ENCODE measurements at regions of chr2 and their contacts with region 1.

Region 1: DNA sequence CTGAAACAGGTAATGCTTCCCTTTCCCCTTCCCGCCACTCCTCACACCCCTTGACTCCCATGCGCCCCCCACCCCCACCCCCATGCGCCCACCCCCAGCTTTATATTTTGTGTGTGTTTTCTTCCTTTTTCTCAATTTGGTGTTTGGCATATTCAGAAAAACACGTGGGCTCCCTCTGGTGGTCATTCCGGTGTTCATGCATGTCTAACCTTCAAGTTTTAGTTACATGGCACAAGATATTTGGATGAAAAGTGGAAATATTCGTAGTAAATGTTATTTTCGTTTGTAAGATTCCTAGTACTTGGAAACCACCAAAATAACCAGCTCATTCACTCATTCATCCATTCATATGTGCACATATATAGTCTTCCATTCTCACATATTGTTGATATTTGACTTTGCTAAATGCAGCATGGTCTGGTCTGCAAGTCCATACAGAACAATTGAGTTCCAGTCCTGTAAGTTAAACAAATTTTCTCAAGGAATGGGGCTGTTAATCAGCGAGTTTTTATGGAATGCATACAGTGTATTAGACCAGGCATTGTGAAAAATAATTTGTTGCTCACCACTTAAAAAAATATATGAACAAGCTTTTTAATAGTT is 143.6 kb upstream of the MAP3K20 start:
- DNase-seq: peak; percentile 79
- ATAC-seq: peak; percentile 42
- H3K4me3 Mint-ChIP-seq: no peak overlapping the region
- H3K27ac Mint-ChIP-seq: no peak overlapping the region
- H3K4me1 Mint-ChIP-seq: peaks cover 6% of the 10 kb centered on the region
- H3K27me3 Mint-ChIP-seq: peaks cover 7% of the 10 kb centered on the region

Region 2: GRCh38 chr2:172806493-172806892 is 125.5 kb before region 1 on chr2:
- CTCF ChIA-PET with region 1: interaction called, 67 read pairs
- POLR2A ChIA-PET with region 1: no interaction called
- DNase-seq: peak; percentile 30
- ATAC-seq: no peak
- H3K4me3 Mint-ChIP-seq: no peak overlapping the region
- H3K27ac Mint-ChIP-seq: no peak overlapping the region
- H3K4me1 Mint-ChIP-seq: no peaks in the 10 kb centered on the region
- H3K27me3 Mint-ChIP-seq: no peaks in the 10 kb centered on the region

Region 3: GRCh38 chr2:172864182-172864581 is 67.8 kb before region 1 on chr2:
- CTCF ChIA-PET with region 1: interaction called, 19 read pairs
- POLR2A ChIA-PET with region 1: no interaction called
- DNase-seq: peak; percentile 56
- ATAC-seq: no peak
- H3K4me3 Mint-ChIP-seq: no peak overlapping the region
- H3K27ac Mint-ChIP-seq: no peak overlapping the region
- H3K4me1 Mint-ChIP-seq: no peaks in the 10 kb centered on the region
- H3K27me3 Mint-ChIP-seq: peaks cover 8% of the 10 kb centered on the region

Region 4: DNA sequence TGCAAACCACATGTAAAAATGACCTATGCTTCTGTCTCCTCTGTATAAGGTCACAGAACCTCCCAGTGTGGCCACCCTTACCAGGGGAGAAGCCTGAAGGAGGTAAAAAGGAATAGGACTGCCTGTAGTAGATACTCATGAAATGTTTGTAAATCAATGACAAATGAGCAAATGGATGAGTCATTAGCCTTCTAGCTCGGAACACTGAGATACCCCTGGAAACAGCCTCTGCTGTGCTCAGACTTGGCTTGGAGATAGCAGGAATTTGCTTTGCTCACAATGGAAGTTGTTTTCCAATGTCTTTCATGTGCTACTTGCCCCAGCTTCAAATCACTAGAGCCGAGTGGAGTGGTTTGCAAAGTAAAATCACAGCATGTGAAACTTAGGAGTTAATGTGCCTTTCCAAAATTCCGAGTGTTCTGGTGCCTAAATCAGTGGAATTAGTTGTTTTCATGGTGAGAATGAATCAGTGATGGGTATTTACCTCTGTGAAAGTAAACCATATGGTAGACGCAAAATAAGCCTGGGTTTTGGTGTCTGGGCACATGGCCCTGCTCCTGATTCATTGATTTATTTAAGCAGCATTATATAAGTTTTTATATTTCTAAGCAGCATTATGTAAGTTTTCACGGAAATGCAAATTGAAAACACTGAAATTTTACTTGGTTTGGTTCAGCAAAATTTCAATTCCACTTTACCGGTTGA is 10.3 kb before region 1 on chr2:
- CTCF ChIA-PET with region 1: interaction called, 21 read pairs
- POLR2A ChIA-PET with region 1: no interaction called
- DNase-seq: no peak
- ATAC-seq: no peak
- H3K4me3 Mint-ChIP-seq: no peak overlapping the region
- H3K27ac Mint-ChIP-seq: no peak overlapping the region
- H3K4me1 Mint-ChIP-seq: no peaks in the 10 kb centered on the region
- H3K27me3 Mint-ChIP-seq: peaks cover 1% of the 10 kb centered on the region

Region 5: DNA sequence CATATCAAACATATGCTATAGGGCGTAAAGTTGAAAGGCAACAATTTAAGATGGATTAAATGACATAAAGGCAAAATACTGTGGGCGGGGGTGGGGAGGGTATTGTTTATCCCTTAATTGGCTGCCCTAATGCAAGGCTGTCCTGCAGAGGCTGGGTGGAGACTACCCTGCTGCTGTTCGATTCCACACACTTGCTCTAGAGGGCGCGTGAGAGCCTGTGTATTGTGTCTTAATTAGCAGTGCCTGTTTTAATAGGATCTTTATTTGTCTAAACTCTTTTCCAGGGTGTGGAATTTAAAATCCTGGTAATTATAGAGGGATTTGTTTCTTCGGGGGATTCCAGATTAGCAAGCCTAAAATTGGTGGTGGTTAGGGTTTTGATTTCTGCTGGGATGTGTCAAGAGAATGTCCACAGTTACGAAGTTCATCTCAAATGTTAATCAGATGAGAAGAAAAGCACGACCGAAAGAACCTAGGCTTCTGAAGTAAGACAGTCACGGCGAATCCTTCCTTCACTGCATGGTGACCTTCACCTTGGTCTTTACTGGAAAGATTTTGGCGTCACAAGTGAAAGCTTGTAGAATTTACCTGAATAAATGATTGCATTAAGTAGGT is 40.1 kb after region 1 on chr2:
- CTCF ChIA-PET with region 1: interaction called, 14 read pairs
- POLR2A ChIA-PET with region 1: no interaction called
- DNase-seq: peak; percentile 62
- ATAC-seq: peak; percentile 61
- H3K4me3 Mint-ChIP-seq: no peak overlapping the region
- H3K27ac Mint-ChIP-seq: no peak overlapping the region
- H3K4me1 Mint-ChIP-seq: peaks cover 11% of the 10 kb centered on the region
- H3K27me3 Mint-ChIP-seq: peaks cover 14% of the 10 kb centered on the region

Region 6: GRCh38 chr2:173048897-173049661 is 117.1 kb after region 1 on chr2:
- CTCF ChIA-PET with region 1: no interaction called
- POLR2A ChIA-PET with region 1: no interaction called
- DNase-seq: no peak
- ATAC-seq: no peak
- H3K4me3 Mint-ChIP-seq: no peak overlapping the region
- H3K27ac Mint-ChIP-seq: no peak overlapping the region
- H3K4me1 Mint-ChIP-seq: peaks cover 5% of the 10 kb centered on the region
- H3K27me3 Mint-ChIP-seq: peaks cover 16% of the 10 kb centered on the region

Region 7: DNA sequence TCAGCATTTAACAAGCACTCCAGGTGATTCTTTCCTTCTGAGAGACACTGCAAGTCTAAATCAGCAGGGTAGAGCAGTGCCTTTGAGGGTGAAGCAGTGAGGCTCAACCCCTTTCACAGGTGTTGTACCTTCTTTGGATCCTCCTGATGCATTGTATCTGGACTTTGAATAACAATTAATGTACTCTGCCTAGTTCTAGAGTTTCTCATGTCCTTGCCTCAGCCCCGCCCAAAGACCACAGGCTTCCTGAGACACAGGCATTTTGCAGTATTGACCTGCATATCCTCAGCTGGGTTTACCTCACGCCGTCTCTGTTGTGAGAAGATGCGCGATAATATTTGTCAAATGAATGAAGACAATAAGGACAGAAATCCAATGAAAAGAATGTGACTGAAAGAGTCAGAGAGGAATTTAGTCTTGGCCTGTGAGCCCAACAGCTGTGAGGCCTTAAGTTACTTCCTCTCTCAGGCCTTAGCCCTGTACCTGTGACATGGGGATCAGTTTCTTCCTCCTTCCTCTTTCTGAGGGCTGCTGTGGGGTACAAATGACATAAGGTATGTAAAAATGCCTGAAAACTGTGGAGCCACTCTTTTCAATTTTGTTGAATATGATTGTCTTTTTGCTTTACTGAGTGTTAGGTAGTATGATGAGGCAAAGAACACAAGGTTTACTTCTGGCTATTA is 1621.9 kb after region 1 on chr2:
- CTCF ChIA-PET with region 1: no interaction called
- POLR2A ChIA-PET with region 1: no interaction called
- DNase-seq: peak; percentile 51
- ATAC-seq: peak; percentile 58
- H3K4me3 Mint-ChIP-seq: peak overlapping the region; percentile 55
- H3K27ac Mint-ChIP-seq: peak overlapping the region; percentile 86
- H3K4me1 Mint-ChIP-seq: peaks cover 35% of the 10 kb centered on the region
- H3K27me3 Mint-ChIP-seq: no peaks in the 10 kb centered on the region

Measured in activated CD8-positive, alpha-beta T cell treated with anti-CD3 and anti-CD28 coated beads, Interleukin-2, amount 10 ng/mL, durations not matched to agents 7 days and 5 days (primary cell).